Activated CD4-positive, alpha-beta memory T cell treated with anti-CD3 and anti-CD28 coated beads for 36 hours (primary cell): ENCODE measurements at regions of chr9 and their contacts with region 1.

Region 1: GRCh38 chr9:99012942-99013512 is 69.3 kb downstream of the COL15A1 start:
- DNase-seq: peak; percentile 32
- H3K4me3 Mint-ChIP-seq: no peak overlapping the region
- H3K27ac Mint-ChIP-seq: peak overlapping the region; percentile 55
- H3K4me1 Mint-ChIP-seq: peaks cover 18% of the 10 kb centered on the region
- H3K27me3 Mint-ChIP-seq: no peaks in the 10 kb centered on the region

Region 2: GRCh38 chr9:98993570-98993945 is 19.5 kb before region 1 on chr9:
- CTCF ChIA-PET with region 1: interaction called, 75 read pairs
- POLR2A ChIA-PET with region 1: no interaction called
- intact Hi-C with region 1: loop called (anchors 2 kb)
- DNase-seq: peak; percentile 87
- H3K4me3 Mint-ChIP-seq: no peak overlapping the region
- H3K27ac Mint-ChIP-seq: peak overlapping the region; percentile 39
- H3K4me1 Mint-ChIP-seq: peaks cover 16% of the 10 kb centered on the region
- H3K27me3 Mint-ChIP-seq: peaks cover 8% of the 10 kb centered on the region

Region 3: DNA sequence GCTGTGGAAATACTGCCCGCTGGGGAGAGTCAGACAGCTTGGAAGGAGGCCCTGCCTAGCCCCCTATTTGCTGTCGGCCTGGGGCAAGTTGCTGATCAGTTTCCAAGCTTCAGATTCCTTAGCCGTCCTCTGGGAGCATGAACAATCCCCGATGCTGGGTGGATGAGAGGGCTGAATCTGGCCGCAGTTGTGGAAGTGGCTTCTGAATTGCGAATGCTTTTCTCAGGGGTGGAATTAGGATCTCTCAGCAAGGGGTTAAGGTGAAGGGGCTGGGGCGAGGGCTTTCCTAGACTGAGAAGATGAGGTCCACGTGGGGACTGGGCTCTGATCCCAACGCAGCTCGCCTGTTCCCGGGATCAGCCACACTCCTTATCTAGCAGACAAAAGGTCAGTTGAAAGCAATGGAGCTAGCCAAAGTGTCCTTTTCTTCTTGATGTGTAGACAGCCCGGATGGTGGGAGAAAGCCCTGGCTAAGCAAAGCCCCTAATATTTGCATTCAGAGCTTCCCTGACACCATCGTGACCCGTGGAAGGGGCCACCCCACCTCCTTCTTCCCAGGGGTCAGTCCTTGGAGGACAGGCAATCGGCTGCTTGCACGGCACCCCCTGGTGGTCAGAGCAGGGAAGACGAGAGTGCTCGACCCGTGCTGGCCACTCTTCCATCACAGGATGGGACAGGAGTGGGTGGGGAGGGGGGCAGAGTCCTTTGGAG is 14.4 kb before region 1 on chr9:
- CTCF ChIA-PET with region 1: interaction called, 75 read pairs
- POLR2A ChIA-PET with region 1: no interaction called
- intact Hi-C with region 1: loop called (anchors 2 kb)
- DNase-seq: peak; percentile 73
- H3K4me3 Mint-ChIP-seq: no peak overlapping the region
- H3K27ac Mint-ChIP-seq: no peak overlapping the region
- H3K4me1 Mint-ChIP-seq: peaks cover 23% of the 10 kb centered on the region
- H3K27me3 Mint-ChIP-seq: peaks cover 7% of the 10 kb centered on the region